Activated T-helper 2 cell treated with anti-CD3 and anti-CD28 coated beads, Interferon-gamma antibody, Interleukin-2, Interleukin-4, amounts not matched to agents 10 μg/mL and 5 μg/mL and 100 μg/mL, durations not matched to agents 14 hours and 24 hours and 36 hours (primary cell): ENCODE measurements at regions of chr2 and their contacts with region 1.

Region 1: GRCh38 chr2:227460070-227460485 is 11.9 kb upstream of the AGFG1 start:
- DNase-seq: peak; percentile 45
- H3K4me3 Mint-ChIP-seq: peak overlapping the region; percentile 27
- H3K27ac Mint-ChIP-seq: peak overlapping the region; percentile 88
- H3K4me1 Mint-ChIP-seq: peaks cover 61% of the 10 kb centered on the region
- H3K27me3 Mint-ChIP-seq: no peaks in the 10 kb centered on the region

Region 2: GRCh38 chr2:227324995-227325838 is 134.9 kb before region 1 on chr2 and contains the start of gene MFF:
- intact Hi-C with region 1: loop called (anchors 2 kb)
- DNase-seq: peak; percentile 89
- H3K4me3 Mint-ChIP-seq: peak within 1 kb of the TSS; percentile 90
- H3K27ac Mint-ChIP-seq: peak within 1 kb of the TSS; percentile 90
- H3K4me1 Mint-ChIP-seq: peaks cover 31% of the 10 kb centered on the region
- H3K27me3 Mint-ChIP-seq: peaks cover 5% of the 10 kb centered on the region
- total RNA-seq, gene MFF: 74.4 and 77.3 TPM in 2 replicates

Region 3: DNA sequence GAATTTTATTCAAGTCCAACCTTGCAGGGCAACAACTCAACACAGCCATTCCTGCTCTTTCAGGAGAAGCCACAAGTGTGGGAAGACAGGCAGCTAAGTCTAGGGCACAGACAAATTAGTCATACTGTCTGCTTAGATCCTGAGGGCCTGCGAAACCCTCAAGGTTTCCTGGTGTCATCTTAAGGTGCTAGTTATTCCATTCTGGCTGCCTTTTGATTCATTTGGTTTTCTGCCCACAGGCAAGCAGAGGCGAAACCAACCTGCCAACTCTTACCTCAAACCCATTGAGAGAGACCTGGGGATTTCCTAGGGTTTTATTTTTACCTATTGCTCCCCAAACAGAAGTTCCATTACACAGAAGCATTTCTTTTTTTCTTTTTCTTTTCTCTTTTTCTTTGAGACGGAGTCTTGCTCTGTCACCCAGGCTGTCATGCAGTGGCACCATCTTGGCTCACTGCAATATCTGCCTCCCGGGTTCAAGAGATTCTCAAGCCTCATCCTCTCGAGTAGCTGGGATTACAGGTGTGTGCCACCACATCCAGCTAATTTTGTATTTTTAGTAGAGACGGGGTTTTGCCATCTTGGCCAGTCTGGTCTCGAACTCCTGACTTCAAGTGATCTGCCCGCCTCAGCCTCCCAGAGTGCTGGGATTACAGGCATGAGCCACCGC is 48.6 kb before region 1 on chr2:
- intact Hi-C with region 1: loop called (anchors 1 kb)
- DNase-seq: peak; percentile 18
- H3K4me3 Mint-ChIP-seq: peak overlapping the region; percentile 37
- H3K27ac Mint-ChIP-seq: peak overlapping the region; percentile 84
- H3K4me1 Mint-ChIP-seq: peaks cover 53% of the 10 kb centered on the region
- H3K27me3 Mint-ChIP-seq: no peaks in the 10 kb centered on the region

Region 4: DNA sequence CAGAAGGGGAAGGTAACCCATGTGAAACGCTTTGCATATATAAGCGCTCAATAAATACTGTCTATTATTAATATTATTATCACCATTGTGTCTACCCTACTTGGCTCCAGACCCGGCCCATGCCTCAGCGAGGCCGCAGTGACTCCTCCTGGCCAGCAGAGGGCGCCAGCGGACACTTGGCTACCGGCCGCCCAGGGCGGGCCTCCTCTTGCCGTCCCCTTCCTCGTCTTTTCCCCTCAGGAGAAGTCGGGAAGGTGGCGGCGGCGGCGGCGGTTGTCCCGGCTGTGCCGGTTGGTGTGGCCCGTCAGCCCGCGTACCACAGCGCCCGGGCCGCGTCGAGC is 11.8 kb after region 1 on chr2 and contains the start of gene AGFG1:
- intact Hi-C with region 1: loop called (anchors 1 kb)
- DNase-seq: peak; percentile 81
- H3K4me3 Mint-ChIP-seq: peak within 1 kb of the TSS; percentile 88
- H3K27ac Mint-ChIP-seq: peak within 1 kb of the TSS; percentile 78
- H3K4me1 Mint-ChIP-seq: peaks cover 31% of the 10 kb centered on the region
- H3K27me3 Mint-ChIP-seq: no peaks in the 10 kb centered on the region
- total RNA-seq, gene AGFG1: 137 and 139 TPM in 2 replicates

Region 5: DNA sequence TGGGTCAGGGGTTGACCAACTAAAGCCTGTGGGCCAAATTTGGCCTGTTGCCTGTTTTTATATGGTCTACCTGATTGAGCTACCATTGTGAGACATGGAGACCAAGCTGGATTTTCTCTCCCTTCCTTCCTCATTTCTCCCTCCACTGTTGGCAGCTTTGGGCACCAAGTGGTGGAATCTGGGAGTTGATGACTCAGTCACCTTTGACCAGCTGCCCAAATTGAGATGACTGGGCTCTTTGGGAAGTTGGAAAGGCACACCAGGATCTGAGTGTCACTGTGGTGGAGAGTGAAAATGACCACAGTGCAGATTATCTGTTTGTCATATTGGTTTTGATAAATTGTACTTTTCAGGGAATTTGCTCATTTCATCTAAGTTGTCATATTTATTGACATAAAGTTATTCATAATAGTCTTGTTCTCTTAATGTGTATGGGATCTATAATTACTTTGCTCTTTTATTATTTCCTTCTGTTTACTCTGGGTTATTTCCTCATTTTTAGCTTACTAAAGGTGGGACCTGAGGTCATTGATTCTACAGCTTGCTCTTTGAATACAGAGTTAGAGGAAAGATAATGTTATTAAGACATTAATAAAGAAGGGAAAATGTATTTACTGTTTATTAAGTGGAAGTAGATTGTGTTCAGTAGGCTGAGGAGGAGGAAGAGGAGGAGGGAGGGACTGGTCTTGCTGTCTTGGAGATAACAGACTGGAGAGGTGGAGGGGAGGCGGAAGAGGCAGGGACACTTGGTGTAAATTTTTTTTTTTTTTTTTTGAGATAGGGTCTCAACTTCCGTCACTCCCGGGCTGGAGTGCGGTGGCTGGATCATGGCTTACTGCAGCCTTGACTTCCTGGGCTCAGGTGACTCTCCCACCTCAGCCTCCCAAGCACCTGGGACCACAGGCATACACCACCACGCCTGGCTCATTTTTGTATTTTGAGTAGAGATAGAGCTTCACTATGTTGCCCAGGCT is 43.6 kb after region 1 on chr2:
- intact Hi-C with region 1: no loop called
- DNase-seq: no peak
- H3K4me3 Mint-ChIP-seq: no peak overlapping the region
- H3K27ac Mint-ChIP-seq: no peak overlapping the region
- H3K4me1 Mint-ChIP-seq: peaks cover 31% of the 10 kb centered on the region
- H3K27me3 Mint-ChIP-seq: no peaks in the 10 kb centered on the region

Region 6: DNA sequence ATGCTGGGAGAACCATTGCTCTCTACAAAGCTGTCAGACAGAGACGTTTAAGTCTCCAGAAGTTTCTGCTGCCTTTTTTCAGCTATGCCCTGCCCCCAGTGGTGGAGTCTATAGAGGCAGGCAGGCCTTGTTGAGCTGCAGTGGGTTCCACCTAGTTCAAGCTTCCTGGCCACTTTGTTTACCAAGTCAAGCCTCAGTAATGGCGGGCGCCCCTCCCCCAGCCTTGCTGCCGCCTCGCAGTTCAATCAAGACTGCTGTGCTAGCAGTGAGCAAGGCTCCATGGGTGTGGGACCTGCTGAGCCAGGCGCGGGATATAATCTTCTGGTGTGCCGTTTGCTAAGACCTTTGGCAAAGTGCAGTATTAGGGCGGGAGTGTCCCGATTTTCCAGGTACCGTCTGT is 85.9 kb after region 1 on chr2:
- intact Hi-C with region 1: no loop called
- DNase-seq: no peak
- H3K4me3 Mint-ChIP-seq: no peak overlapping the region
- H3K27ac Mint-ChIP-seq: no peak overlapping the region
- H3K4me1 Mint-ChIP-seq: peaks cover 13% of the 10 kb centered on the region
- H3K27me3 Mint-ChIP-seq: no peaks in the 10 kb centered on the region

Region 7: GRCh38 chr2:227817850-227818674 is 358.0 kb after region 1 on chr2:
- intact Hi-C with region 1: loop called (anchors 5 kb)
- DNase-seq: peak; percentile 13
- H3K4me3 Mint-ChIP-seq: no peak overlapping the region
- H3K27ac Mint-ChIP-seq: peak overlapping the region; percentile 71
- H3K4me1 Mint-ChIP-seq: peaks cover 16% of the 10 kb centered on the region
- H3K27me3 Mint-ChIP-seq: peaks cover 4% of the 10 kb centered on the region